A673 (cell line): ENCODE measurements at regions of chr19 and their contacts with region 1.

Region 1: GRCh38 chr19:9796113-9796773 is 22.6 kb downstream of the FBXL12 start:
- DNase-seq: peak; percentile 93
- H3K4me3 ChIP-seq: no peak overlapping the region
- H3K27ac ChIP-seq: no peak overlapping the region
- H3K4me1 ChIP-seq: no peaks in the 10 kb centered on the region
- H3K27me3 ChIP-seq: no peaks in the 10 kb centered on the region
- CTCF ChIP-seq: peak; percentile 90

Region 2: DNA sequence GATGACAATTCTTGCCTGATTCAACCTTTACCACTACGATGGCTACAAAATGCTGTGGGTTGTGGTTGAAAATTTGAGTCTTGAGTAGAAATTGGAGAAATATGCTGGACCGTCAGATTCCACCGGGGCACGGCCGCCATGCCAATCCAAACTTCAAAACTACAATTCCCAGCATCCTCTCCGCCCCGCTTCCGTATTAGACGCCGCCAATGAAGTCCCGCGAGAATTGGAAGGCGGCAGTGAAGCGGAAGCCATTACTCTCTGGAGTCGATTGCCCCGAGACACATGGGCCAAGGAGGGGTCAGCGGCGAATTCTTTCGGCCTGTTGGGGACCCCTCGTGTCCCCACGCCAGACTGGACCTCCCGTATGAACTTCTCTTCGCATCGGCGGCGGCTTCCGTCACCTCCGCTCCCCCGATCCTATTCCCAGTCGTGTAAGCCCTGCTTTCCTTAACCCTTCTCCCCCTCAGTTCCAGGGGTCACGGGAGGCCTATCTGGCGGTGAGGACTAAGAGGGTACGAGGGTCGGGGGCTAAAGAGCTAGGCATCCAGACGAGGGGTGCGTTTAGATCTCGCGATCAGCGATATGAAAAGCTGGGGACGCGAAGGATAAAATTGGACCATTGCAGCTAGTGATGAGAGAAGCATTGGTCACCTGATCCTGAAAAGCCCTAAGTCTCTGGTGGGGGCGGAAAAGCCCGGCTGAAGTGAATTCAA is 655.9 kb before region 1 on chr19 and contains the start of gene ZNF317:
- CTCF ChIA-PET with region 1: no interaction called
- POLR2A ChIA-PET with region 1: no interaction called
- intact Hi-C with region 1: loop called (anchors 2 kb)
- DNase-seq: peak; percentile 95
- H3K4me3 ChIP-seq: peak within 1 kb of the TSS; percentile 83
- H3K27ac ChIP-seq: peak within 1 kb of the TSS; percentile 85
- H3K4me1 ChIP-seq: no peaks in the 10 kb centered on the region
- H3K27me3 ChIP-seq: no peaks in the 10 kb centered on the region
- CTCF ChIP-seq: no peak
- total RNA-seq, gene ZNF317: 46.2 and 50.6 TPM in 2 replicates

Region 3: DNA sequence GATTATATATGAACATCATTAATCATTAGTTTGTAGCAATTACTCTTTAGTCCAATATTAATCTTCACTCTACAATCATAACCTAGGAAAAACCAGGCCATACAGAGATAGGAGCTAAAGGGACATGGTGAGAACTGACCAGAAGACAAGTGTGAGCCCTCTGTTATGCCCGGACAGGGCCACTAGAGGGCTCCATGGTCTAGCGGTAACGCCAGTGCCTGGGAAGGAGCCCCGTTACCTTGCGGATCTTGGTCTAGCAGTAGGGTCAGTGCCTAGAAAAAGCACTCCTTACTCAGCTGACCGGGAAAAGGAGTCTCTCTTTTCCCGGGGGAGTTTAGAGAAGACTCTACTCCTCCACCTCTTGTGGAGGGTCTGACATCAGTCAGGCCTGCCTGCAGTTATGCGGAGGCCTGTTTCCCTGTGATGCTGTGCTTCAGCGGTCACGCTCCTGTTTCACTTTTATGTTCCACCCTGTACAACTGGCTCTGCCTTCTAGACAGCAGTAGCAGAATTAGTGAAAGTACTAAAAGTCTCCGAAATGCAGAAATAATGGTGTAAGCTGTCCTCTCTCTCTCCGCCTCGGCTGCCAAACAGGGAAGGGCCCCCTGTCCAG is 590.6 kb before region 1 on chr19:
- CTCF ChIA-PET with region 1: interaction called, 5 read pairs
- POLR2A ChIA-PET with region 1: no interaction called
- intact Hi-C with region 1: loop called (anchors 1 kb)
- DNase-seq: peak; percentile 68
- H3K4me3 ChIP-seq: peak overlapping the region; percentile 32
- H3K27ac ChIP-seq: no peak overlapping the region
- H3K4me1 ChIP-seq: no peaks in the 10 kb centered on the region
- H3K27me3 ChIP-seq: no peaks in the 10 kb centered on the region
- CTCF ChIP-seq: peak; percentile 80

Region 4: GRCh38 chr19:9309974-9310446 is 486.2 kb before region 1 on chr19:
- CTCF ChIA-PET with region 1: no interaction called
- POLR2A ChIA-PET with region 1: no interaction called
- intact Hi-C with region 1: loop called (anchors 2 kb)
- DNase-seq: peak; percentile 96
- H3K4me3 ChIP-seq: peak overlapping the region; percentile 89
- H3K27ac ChIP-seq: peak overlapping the region; percentile 85
- H3K4me1 ChIP-seq: peaks cover 6% of the 10 kb centered on the region
- H3K27me3 ChIP-seq: no peaks in the 10 kb centered on the region
- CTCF ChIP-seq: no peak

Region 5: GRCh38 chr19:9584073-9584833 is 212.0 kb before region 1 on chr19 and contains the start of gene ZNF121:
- CTCF ChIA-PET with region 1: interaction called, 4 read pairs
- POLR2A ChIA-PET with region 1: no interaction called
- intact Hi-C with region 1: loop called (anchors 1 kb)
- DNase-seq: peak; percentile 89
- H3K4me3 ChIP-seq: peak within 1 kb of the TSS; percentile 72
- H3K27ac ChIP-seq: peak within 1 kb of the TSS; percentile 87
- H3K4me1 ChIP-seq: no peaks in the 10 kb centered on the region
- H3K27me3 ChIP-seq: no peaks in the 10 kb centered on the region
- CTCF ChIP-seq: no peak
- total RNA-seq, gene ZNF121: 59.9 and 65.6 TPM in 2 replicates

Region 6: DNA sequence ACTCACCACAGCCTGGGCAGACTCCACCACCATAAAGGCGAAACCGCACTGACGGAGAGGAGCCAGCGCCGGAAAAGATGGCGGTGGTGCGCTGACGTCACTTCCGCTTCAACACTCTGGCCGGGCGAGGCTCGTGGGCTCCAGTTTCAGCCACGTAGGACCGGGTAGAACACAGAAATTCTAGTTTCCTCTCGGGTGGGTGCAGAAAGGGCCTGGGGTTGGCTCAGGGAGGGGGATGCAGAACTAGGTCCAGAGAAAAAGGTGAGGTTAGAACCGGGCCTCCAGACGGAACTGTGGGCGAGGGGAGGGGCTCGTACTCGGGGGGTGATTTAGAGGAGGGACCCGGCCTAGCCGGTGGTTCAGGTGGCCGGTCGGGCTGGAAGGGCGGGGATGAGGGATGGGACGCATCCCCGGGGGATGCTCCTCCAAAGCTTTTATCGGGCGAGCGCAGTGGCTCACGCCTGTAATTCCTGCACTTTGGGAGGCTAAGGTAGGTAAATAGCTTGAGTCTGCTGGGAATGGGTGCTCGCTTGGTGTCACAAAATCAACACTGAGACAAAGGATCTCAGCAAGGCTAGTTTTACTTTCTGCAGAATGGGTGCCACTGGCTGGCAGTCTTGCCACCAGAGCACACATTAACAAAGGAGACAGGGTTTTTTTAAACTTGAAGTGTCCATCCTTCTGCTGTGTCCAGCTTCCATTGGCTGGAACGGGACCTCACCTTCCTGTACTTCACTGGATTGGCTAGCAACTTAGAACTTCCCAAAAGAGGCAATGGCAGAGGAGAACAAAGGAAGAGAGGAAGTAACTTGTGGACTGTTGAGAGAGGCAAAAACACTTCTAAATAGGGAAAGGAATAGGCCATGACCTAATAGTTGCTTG is 174.8 kb before region 1 on chr19 and contains the start of gene ZNF561:
- CTCF ChIA-PET with region 1: interaction called, 4 read pairs
- POLR2A ChIA-PET with region 1: no interaction called
- intact Hi-C with region 1: loop called (anchors 1 kb)
- DNase-seq: peak; percentile 92
- H3K4me3 ChIP-seq: peak within 1 kb of the TSS; percentile 78
- H3K27ac ChIP-seq: peak within 1 kb of the TSS; percentile 96
- H3K4me1 ChIP-seq: peaks cover 6% of the 10 kb centered on the region
- H3K27me3 ChIP-seq: no peaks in the 10 kb centered on the region
- CTCF ChIP-seq: no peak
- total RNA-seq, gene ZNF561: 37.7 and 38.2 TPM in 2 replicates

Region 7: DNA sequence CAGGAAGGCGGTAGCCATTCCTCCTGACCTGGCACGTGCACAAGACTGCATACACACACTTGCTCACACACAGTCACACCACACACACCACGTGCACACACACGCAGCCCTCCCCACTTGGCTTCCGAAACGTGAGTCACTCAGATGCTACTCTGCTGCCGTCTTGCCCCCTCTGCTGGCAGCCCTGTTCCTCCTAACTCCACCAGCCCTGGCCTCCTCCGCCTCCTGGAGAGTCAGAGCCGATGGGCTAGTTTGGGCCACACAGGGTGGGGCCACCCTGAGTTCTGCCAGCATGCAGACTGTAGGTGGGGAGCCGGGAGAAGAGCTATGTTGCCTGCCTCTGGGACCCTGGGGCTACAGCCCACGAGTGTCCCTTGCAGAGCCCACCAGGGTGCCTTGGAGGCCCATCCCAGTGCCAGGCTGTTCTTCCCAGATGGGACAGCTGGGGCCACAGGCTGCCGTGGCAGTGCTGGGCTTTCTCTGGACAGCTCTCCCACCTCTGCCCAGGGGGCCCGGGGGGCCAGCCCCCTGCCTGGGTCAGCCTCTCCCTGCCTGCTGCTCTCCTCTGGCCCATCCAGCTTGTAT is 50.9 kb after region 1 on chr19:
- CTCF ChIA-PET with region 1: no interaction called
- POLR2A ChIA-PET with region 1: no interaction called
- intact Hi-C with region 1: no loop called
- DNase-seq: peak; percentile 81
- H3K4me3 ChIP-seq: no peak overlapping the region
- H3K27ac ChIP-seq: peak overlapping the region; percentile 42
- H3K4me1 ChIP-seq: peaks cover 14% of the 10 kb centered on the region
- H3K27me3 ChIP-seq: no peaks in the 10 kb centered on the region
- CTCF ChIP-seq: peak; percentile 70